Activated B cell treated with CpG ODN at 0.5 μM for 24 hours (primary cell): ENCODE measurements at regions of chr9 and their contacts with region 1.

Region 1: DNA sequence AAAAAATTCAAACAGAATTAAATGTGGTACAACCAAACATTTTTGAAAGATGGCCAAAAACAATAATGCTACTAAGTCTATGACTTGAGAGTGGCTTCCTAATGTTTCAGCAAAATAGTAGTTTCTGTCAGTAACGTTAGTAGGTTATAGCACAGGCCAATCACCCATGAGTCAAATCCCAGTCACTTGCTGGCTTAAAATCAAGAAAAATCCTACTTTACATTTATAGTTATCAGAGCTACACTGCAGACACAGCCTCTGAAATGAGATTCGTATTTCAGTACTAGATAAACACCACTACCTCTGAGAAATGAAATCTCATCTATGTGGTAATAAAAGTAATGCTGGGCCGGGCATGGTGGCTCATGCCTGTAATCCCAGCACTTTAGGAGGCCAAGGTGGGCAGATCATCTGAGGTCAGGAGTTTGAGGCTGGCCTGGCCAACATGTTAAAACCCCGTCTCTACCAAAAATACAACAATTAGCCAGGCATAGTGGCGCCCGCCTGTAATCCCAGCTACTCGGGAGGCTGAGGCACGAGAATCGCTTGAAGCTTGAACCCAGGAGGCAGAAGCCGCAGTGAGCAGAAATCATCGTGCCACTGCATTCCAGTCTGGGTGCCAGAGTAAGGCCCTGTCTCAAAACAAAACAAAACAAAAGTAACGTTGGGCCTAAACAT is 6.1 kb downstream of the ZDHHC21 start:
- DNase-seq: no peak
- ATAC-seq: no peak
- H3K4me3 Mint-ChIP-seq: no peak overlapping the region
- H3K27ac Mint-ChIP-seq: peak overlapping the region; percentile 95
- H3K4me1 Mint-ChIP-seq: peaks cover 69% of the 10 kb centered on the region
- H3K27me3 Mint-ChIP-seq: no peaks in the 10 kb centered on the region
- CTCF ChIP-seq: no peak

Region 2: DNA sequence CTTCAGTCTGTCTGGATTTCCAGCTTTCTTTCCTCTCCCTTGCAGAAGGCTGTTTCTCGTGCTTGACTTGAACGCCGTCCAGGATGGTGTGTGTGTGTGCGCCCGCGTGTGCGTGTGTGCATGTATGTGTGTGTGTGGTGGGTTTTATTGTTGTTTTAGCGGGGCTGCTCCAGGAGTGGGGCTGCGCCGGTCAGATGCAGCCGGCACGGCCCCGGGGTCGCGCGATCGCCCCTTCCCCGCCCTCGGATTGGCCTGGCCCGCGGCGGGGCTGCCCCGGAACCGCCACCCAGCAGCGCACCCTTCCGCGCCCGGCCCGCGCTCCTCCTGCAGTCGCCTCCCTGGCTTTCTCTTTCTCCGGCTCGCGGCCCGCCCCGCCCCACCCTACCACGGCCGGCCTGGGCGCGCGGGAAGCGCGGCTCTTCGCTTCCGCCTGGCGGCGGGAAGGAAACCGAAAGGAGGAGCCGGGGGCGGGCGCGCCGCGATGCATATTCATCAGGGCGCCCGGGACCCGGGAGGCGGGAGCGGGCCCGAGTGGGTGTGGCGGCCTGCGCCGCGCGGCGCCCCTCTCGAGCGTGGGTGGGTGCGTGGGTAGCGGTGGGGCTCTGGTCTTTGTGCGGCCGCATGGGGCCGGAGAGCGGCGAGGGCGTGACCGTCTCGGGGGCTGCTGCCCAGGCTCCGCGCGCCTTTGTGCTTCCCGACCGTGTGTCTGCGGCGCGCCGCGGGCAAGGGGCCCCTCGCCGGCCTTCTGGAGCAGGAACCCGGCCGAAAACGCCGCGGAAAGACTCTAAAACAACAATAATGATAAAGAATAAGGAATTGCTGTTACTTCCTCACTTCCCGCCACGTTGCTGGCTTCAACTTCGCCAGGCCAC is 364.7 kb before region 1 on chr9:
- CTCF ChIA-PET with region 1: no interaction called
- POLR2A ChIA-PET with region 1: no interaction called
- intact Hi-C with region 1: loop called (anchors 5 kb)
- DNase-seq: peak; percentile 64
- ATAC-seq: peak; percentile 91
- H3K4me3 Mint-ChIP-seq: peak overlapping the region; percentile 84
- H3K27ac Mint-ChIP-seq: peak overlapping the region; percentile 63
- H3K4me1 Mint-ChIP-seq: peaks cover 16% of the 10 kb centered on the region
- H3K27me3 Mint-ChIP-seq: peaks cover 25% of the 10 kb centered on the region
- CTCF ChIP-seq: no peak

Region 3: DNA sequence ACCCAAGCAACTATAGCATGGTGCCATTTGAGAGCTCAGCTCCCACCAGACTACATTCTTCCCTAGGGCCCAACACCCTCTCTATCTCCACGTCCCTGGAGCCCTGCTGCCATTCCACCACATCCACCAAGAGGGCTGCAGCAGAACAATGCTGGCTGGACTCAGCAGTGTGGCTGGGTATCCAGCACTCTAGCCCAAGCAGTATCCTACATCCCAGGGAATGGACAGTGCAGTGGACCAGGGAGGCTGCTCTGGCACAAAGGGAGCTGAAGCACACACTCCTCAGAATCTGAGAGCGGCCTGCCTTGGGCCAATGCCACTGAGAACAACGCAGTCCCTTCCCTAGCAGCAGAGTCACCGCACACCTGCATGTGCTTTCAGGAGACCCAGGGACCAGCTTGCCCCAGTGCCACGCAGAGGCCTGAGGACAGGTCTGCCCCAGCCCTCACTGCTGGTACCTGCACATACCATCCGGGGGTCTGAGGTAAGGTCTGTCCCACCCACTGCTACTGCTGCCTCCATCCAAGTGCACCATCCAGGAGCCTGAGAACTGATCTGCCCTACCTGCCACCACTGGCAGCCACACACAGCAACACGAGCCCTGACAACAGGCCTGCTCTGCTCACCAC is 89.9 kb before region 1 on chr9:
- CTCF ChIA-PET with region 1: no interaction called
- POLR2A ChIA-PET with region 1: no interaction called
- intact Hi-C with region 1: no loop called
- DNase-seq: no peak
- ATAC-seq: no peak
- H3K4me3 Mint-ChIP-seq: no peak overlapping the region
- H3K27ac Mint-ChIP-seq: no peak overlapping the region
- H3K4me1 Mint-ChIP-seq: no peaks in the 10 kb centered on the region
- H3K27me3 Mint-ChIP-seq: no peaks in the 10 kb centered on the region
- CTCF ChIP-seq: no peak

Region 4: DNA sequence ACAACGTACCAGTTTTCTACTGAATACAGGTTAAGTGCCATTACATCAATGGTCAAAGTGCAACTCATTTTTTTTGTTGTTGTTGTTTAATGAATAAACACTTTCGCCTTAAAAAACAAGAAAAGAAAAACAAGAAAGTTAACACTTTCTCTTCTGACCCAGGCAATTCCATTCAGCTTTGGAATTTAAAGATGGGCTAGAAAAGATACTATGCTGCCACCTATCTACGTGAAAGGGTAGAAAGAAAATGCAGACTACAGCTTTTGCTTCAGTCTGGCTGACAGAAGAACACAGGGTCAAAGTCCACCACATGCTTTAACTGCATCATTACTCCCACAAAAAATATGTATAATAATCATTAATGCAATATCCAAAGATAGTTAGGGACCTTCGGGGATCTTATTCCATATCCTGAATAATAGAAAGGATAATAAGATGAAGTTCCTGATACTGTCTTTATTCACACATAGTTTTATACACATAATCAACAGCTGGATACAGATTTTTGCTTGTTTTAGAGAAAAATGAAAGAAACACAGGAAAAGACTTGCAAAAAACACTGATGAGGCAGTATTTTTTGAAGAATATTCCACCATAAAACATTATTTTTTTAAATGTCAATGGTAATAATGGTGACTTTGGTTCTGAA is 34.3 kb before region 1 on chr9:
- CTCF ChIA-PET with region 1: no interaction called
- POLR2A ChIA-PET with region 1: no interaction called
- intact Hi-C with region 1: no loop called
- DNase-seq: no peak
- ATAC-seq: no peak
- H3K4me3 Mint-ChIP-seq: no peak overlapping the region
- H3K27ac Mint-ChIP-seq: no peak overlapping the region
- H3K4me1 Mint-ChIP-seq: no peaks in the 10 kb centered on the region
- H3K27me3 Mint-ChIP-seq: no peaks in the 10 kb centered on the region
- CTCF ChIP-seq: no peak